ENCODE measurements at regions of chr22 and their contacts with region 1.

Region 1: GRCh38 chr22:46122511-46122971 is 27.8 kb upstream of the PPARA start:
- DNase-seq: no peak
- H3K4me3 ChIP-seq: no peak overlapping the region
- CTCF ChIP-seq: peak; percentile 91

Region 2: DNA sequence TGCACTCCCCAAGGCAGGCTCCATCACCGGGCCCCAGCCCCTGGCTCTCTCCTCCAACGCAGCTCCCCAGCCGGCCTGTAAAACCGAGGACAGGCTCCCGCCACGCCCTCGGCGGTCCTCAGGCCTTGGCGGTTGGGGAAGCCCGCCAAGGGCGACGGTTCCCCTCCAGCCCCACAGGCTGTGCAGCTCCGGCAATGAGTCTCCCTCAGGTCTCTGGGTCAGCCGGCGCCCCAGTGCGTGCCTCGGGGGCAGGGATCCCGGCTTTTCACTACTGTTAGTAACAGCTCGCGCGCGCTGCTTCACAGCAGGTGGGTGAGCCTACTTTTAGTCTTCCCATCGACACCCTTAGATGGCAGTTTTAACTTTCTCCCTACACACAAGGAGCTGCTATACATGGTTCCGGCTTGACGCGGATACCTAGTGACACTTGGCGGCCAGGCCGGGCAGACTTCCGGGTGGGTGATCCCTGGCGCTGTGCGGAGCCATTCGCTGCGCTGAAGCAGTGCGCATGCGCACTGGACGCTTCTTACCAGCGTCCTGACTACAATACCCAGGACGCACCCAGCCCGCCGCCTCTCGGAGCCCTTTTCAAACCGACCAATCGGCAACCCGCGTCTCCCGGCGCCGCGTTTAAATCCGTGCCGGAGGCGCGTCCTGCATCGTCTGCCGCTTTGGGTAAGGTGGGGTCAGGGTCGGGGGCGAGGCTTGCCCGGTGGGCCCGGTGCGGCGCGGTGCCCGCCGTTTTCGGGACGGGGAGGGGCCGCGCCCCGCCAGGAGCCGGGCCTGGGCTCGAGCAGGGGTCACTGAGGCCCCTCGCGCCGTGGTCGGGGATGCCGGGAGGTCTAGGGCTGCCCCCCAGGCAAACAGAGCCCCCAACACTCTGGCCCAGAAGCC is 174.0 kb after region 1 on chr22 and contains the start of gene GTSE1:
- CTCF ChIA-PET with region 1: interaction called, 13 read pairs
- POLR2A ChIA-PET with region 1: no interaction called
- DNase-seq: peak; percentile 76
- H3K4me3 ChIP-seq: peak within 1 kb of the TSS; percentile 71
- CTCF ChIP-seq: peak; percentile 25

Region 3: GRCh38 chr22:46309526-46310085 is 187.1 kb after region 1 on chr22:
- CTCF ChIA-PET with region 1: interaction called, 73 read pairs
- POLR2A ChIA-PET with region 1: no interaction called
- DNase-seq: no peak
- H3K4me3 ChIP-seq: no peak overlapping the region
- CTCF ChIP-seq: no peak

Region 4: GRCh38 chr22:46320166-46320710 is 197.7 kb after region 1 on chr22:
- CTCF ChIA-PET with region 1: interaction called, 68 read pairs
- POLR2A ChIA-PET with region 1: no interaction called
- DNase-seq: no peak
- H3K4me3 ChIP-seq: no peak overlapping the region
- CTCF ChIP-seq: no peak

Measured in AG04449 (cell line).